CD14-positive monocyte (primary cell): ENCODE measurements at regions of chr21 and their contacts with region 1.

Region 1: GRCh38 chr21:35051287-35051818 is 2.3 kb upstream of the RUNX1 start:
- DNase-seq: peak; percentile 92 to 94 (median 93)
- H3K4me3 ChIP-seq: peak overlapping the region in 1 of 3 experiments; percentile 93
- H3K4me3 Mint-ChIP-seq: peak overlapping the region; percentile 28 to 48
- H3K27ac ChIP-seq: peak overlapping the region; percentile 65 to 99
- H3K27ac Mint-ChIP-seq: peak overlapping the region; percentile 99 to 100 (median 100)
- H3K4me1 ChIP-seq: peaks cover 43 to 48% of the 10 kb centered on the region in 2 donors
- H3K4me1 Mint-ChIP-seq: peaks cover 40% of the 10 kb centered on the region
- H3K27me3 ChIP-seq: no peaks in the 10 kb centered on the region
- H3K27me3 Mint-ChIP-seq: peaks cover 0 to 6% (median 3%) of the 10 kb centered on the region in 3 donors
- CTCF ChIP-seq: peak; percentile 74

Region 2: DNA sequence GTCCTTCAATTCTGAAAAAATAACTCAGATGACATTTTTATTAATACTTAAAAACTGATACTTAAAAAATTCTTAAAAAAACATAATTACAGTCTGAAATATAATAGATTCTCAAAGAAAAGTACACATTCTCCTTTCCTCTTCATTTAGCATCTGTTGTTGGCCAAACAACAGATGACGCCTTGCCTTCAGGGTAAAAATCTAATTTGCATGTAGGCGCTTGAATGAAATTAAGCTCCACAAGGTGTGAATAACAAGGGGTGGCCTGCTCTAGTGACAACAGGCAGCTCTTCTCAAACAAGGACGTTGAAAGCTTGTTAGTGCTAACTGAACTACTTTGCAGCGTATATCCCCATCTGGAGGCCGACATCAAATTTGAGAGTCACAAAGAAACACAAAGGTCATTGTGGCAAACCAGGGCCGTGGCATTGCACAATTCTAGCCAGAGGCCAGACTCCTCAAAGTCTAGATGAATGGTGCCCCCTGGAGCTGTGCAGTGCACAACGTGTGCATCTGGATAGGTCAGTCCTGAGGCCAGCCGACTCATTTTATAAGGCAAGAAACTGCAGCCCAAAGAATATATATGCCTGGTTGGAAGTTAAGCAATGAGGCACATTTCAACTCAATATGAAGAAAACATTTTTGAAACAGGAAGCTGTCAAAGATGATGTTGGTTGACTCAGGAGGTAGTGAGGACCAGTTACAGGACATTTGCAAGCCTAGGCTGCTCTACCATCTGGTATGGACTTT is 457.0 kb after region 1 on chr21:
- intact Hi-C with region 1: loop called in 1 of 2 experiments (anchors 1 kb)
- DNase-seq: peak; percentile 82 to 92 (median 83)
- H3K4me3 ChIP-seq: peak overlapping the region in 1 of 3 experiments; percentile 36
- H3K4me3 Mint-ChIP-seq: peak overlapping the region; percentile 31 to 72
- H3K27ac ChIP-seq: peak overlapping the region; percentile 60 to 94
- H3K27ac Mint-ChIP-seq: peak overlapping the region; percentile 94 to 99 (median 96)
- H3K4me1 ChIP-seq: peaks cover 28 to 48% of the 10 kb centered on the region in 2 donors
- H3K4me1 Mint-ChIP-seq: peaks cover 41% of the 10 kb centered on the region
- H3K27me3 ChIP-seq: no peaks in the 10 kb centered on the region
- H3K27me3 Mint-ChIP-seq: peaks cover 0 to 2% (median 0%) of the 10 kb centered on the region in 3 donors
- CTCF ChIP-seq: peak; percentile 63

Region 3: DNA sequence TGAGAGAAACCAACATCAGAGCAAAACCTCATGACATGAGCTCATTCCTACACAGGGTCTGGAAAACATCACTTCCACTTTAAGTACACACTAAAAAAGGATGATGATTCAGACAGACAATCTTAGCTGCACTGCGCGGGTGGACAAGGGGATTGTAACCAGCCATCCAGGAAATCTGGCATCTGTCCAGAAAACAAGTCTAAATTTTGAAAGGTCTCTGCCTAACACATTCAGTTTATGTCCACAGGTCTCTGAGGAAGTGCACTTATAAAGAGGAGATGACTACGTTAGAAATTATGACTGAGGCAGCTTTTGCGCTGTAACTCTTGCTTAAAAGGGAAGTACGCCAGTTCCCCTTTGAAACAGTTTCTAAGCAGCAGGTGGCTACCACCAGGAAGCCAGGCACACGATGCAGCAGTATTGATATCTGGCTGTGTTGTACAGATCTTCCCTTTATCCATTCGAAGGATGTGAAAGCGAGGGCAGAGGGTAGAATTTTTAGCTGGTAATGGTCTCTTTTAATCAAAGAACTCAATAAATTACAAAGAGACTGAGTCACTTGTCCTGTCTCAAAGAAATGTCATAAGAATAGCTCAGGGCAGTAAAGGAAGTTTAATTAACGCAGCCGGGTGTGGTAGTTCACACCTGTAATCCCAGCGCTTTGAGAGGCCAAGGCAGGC is 881.0 kb after region 1 on chr21:
- intact Hi-C with region 1: loop called in 1 of 2 experiments (anchors 5 kb)
- DNase-seq: peak; percentile 97 to 99 (median 98)
- H3K4me3 ChIP-seq: peak overlapping the region in 1 of 3 experiments; percentile 15
- H3K4me3 Mint-ChIP-seq: no peak overlapping the region
- H3K27ac ChIP-seq: peak overlapping the region; percentile 83 to 85
- H3K27ac Mint-ChIP-seq: no peak overlapping the region
- H3K4me1 ChIP-seq: peaks cover 27 to 32% of the 10 kb centered on the region in 2 donors
- H3K4me1 Mint-ChIP-seq: no peaks in the 10 kb centered on the region
- H3K27me3 ChIP-seq: no peaks in the 10 kb centered on the region
- H3K27me3 Mint-ChIP-seq: no peaks in the 10 kb centered on the region
- CTCF ChIP-seq: no peak